Activated B cell treated with CpG ODN at 0.5 μM for 24 hours (primary cell): ENCODE measurements at regions of chr9 and their contacts with region 1.

Region 1: DNA sequence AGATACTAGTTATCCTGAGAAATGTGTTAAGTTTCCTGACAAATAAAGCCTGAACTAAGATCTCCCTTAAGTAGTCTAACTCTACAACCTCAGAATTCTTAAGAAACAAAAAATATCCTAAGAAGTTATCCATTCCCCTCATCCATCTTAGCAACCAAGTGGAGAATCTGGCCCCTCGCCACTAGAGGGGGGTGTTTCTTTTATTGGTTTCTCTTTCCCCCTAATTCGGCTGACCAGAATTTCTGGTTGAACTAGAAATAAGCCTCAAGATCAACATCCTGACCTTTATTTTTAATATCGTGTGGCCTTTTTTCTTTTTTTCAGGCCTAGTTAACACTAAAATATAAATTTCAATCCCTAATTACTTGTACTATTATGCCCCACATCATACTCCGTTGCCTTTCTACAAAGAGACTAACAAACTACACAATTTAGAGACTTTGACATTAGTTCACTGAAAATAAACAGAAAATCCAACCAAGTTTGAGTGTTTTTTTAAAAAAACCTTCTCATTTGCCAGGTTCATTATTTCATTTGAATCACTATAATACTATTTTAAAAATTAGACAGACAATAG is 14.3 kb upstream of the NR4A3 start:
- DNase-seq: no peak
- ATAC-seq: peak; percentile 65
- H3K4me3 Mint-ChIP-seq: no peak overlapping the region
- H3K27ac Mint-ChIP-seq: peak overlapping the region; percentile 5
- H3K4me1 Mint-ChIP-seq: peaks cover 28% of the 10 kb centered on the region
- H3K27me3 Mint-ChIP-seq: no peaks in the 10 kb centered on the region
- CTCF ChIP-seq: no peak

Region 2: DNA sequence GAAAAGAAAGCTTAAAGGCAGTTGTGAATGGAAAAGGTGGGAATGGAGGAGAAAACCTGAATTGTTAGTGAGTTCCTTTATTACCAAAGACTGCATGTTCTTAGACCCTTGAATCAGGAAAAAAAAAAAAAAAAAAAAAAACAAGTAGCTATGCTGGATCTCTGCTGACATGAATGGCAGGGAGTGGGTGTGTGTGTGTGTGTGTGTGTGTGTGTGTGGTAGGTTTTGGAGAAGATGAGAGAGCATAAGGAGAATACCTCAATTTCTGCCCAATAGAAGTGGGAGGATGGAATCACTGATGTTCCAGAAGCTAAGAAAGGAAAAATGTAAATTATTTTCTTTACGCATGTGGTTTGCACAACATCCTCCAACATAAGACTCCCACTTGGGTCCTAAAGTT is 11.1 kb before region 1 on chr9:
- CTCF ChIA-PET with region 1: no interaction called
- POLR2A ChIA-PET with region 1: no interaction called
- intact Hi-C with region 1: no loop called
- DNase-seq: no peak
- ATAC-seq: no peak
- H3K4me3 Mint-ChIP-seq: no peak overlapping the region
- H3K27ac Mint-ChIP-seq: no peak overlapping the region
- H3K4me1 Mint-ChIP-seq: no peaks in the 10 kb centered on the region
- H3K27me3 Mint-ChIP-seq: no peaks in the 10 kb centered on the region
- CTCF ChIP-seq: no peak

Region 3: DNA sequence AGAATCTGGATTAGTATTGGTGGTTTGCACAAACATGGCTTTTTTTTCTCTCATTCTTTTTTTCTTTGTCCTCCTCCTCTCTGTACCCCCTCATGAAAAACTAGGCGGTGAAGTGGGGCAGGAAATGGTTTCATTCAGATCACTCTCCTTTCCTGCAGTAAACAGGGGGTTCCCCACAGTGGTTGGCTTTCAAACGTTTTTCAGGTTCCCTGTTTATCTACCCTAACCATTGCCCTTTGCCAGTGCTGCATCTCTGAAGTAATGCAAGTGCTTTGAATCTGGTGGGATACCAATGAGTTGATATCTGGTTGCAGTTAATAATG is 44.1 kb after region 1 on chr9:
- CTCF ChIA-PET with region 1: no interaction called
- POLR2A ChIA-PET with region 1: no interaction called
- intact Hi-C with region 1: loop called (anchors 10 kb)
- DNase-seq: no peak
- ATAC-seq: peak; percentile 81
- H3K4me3 Mint-ChIP-seq: peak overlapping the region; percentile 26
- H3K27ac Mint-ChIP-seq: peak overlapping the region; percentile 36
- H3K4me1 Mint-ChIP-seq: peaks cover 34% of the 10 kb centered on the region
- H3K27me3 Mint-ChIP-seq: no peaks in the 10 kb centered on the region
- CTCF ChIP-seq: no peak

Region 4: GRCh38 chr9:99906403-99907207 is 99.2 kb after region 1 on chr9 and contains the start of gene STX17:
- CTCF ChIA-PET with region 1: interaction called, 3 read pairs
- POLR2A ChIA-PET with region 1: interaction called, 13 read pairs
- intact Hi-C with region 1: no loop called
- DNase-seq: peak; percentile 90
- ATAC-seq: peak; percentile 87
- H3K4me3 Mint-ChIP-seq: peak within 1 kb of the TSS; percentile 98
- H3K27ac Mint-ChIP-seq: peak within 1 kb of the TSS; percentile 95
- H3K4me1 Mint-ChIP-seq: peaks cover 17% of the 10 kb centered on the region
- H3K27me3 Mint-ChIP-seq: no peaks in the 10 kb centered on the region
- CTCF ChIP-seq: no peak
- total RNA-seq, gene STX17: 32.2 and 39.2 TPM in 2 replicates

Region 5: DNA sequence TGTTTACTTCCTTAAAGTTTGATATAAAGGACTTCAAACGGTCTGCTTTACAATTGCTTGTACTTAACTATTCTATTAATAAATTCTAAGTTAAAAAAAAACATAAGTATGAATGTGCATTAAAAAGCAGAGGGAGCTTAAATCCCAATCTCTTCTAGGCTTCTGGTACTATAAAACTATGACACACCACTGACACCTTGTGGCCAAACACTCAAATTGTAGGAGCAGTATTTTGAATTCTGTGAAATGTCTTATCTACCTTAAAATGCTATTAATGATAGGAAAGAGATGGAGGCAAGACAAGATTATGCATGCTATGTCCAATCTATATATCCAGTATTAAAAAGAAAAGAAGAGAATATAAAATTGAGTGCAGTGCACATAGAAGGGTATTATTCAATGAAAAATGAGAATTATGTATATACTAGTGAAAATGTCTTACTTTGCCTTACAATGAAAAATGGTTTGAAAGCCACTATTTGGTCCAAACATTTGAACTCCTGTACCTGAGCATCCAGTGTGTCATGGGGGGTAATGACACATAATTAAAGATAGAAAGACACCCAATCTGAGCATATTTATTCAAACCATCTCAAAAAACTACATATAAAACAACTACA is 203.8 kb after region 1 on chr9:
- CTCF ChIA-PET with region 1: no interaction called
- POLR2A ChIA-PET with region 1: no interaction called
- intact Hi-C with region 1: loop called (anchors 1 kb)
- DNase-seq: no peak
- ATAC-seq: peak; percentile 62
- H3K4me3 Mint-ChIP-seq: no peak overlapping the region
- H3K27ac Mint-ChIP-seq: no peak overlapping the region
- H3K4me1 Mint-ChIP-seq: no peaks in the 10 kb centered on the region
- H3K27me3 Mint-ChIP-seq: no peaks in the 10 kb centered on the region
- CTCF ChIP-seq: no peak

Region 6: DNA sequence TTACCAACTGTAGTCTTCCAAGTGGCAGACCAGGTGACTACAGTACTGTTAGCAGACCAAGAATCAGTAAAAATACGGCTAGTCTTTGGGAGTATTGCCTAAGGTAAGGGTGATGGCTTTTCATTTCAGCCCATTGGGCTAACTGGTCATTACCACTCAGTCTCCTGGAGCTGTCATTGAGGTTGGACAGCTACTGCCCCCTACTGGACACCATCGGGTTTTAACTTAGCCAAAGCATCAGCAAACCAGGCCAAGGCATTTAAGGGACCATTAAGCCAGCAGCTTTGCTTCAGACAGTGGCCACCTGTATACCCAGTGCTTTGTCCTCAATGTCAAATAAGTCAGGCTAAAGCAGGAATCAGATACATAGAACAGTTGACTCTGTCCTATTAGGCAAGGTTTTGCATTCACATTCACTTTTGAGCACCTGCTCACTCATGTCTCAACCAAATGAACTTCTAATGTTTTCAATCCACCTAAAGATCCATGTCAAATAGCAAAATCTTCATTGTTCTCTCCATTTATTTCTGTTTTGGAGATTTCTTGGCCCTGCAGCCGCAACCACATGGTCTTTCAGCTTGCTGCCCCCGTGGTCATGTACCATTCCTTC is 408.9 kb after region 1 on chr9:
- CTCF ChIA-PET with region 1: no interaction called
- POLR2A ChIA-PET with region 1: no interaction called
- intact Hi-C with region 1: loop called (anchors 2 kb)
- DNase-seq: peak; percentile 37
- ATAC-seq: peak; percentile 87
- H3K4me3 Mint-ChIP-seq: no peak overlapping the region
- H3K27ac Mint-ChIP-seq: no peak overlapping the region
- H3K4me1 Mint-ChIP-seq: no peaks in the 10 kb centered on the region
- H3K27me3 Mint-ChIP-seq: no peaks in the 10 kb centered on the region
- CTCF ChIP-seq: no peak

Region 7: GRCh38 chr9:100322954-100323536 is 515.7 kb after region 1 on chr9:
- CTCF ChIA-PET with region 1: no interaction called
- POLR2A ChIA-PET with region 1: no interaction called
- intact Hi-C with region 1: loop called (anchors 1 kb)
- DNase-seq: no peak
- ATAC-seq: no peak
- H3K4me3 Mint-ChIP-seq: no peak overlapping the region
- H3K27ac Mint-ChIP-seq: no peak overlapping the region
- H3K4me1 Mint-ChIP-seq: peaks cover 2% of the 10 kb centered on the region
- H3K27me3 Mint-ChIP-seq: no peaks in the 10 kb centered on the region
- CTCF ChIP-seq: no peak